ENCODE measurements at regions of chr7 and their contacts with region 1.

Region 1: DNA sequence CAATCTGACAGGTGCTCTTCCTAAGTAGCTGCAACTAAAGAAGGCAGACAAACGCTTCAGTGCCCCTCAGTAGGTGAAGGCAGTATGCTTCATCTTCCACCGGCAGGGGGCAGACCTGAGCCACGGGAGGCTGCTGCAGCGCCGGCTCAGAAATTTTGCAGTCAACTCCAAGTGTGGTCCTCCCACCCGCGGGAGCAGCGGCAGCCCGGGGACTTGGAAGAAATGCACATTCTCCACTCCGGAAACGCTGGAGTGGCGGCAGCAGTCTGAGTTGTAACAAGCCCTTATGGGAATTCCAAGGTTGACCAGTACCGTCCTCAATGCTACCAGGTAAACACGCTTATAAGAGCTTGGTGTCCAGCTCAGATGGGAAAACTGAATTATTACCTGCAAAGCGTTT is 3.4 kb downstream of the IGFBP3 start:
- DNase-seq: no peak
- ATAC-seq: peak; percentile 69
- H3K4me3 ChIP-seq: no peak overlapping the region
- H3K27ac ChIP-seq: no peak overlapping the region
- H3K4me1 ChIP-seq: peaks cover 3 to 24% of the 10 kb centered on the region in 2 experiments; a peak in 2 of 4 replicates
- H3K27me3 ChIP-seq: peaks cover 8% of the 10 kb centered on the region; the same call in 1 of the 2 replicates
- CTCF ChIP-seq: peak; percentile 70 to 95 (median 91)
- POLR2A ChIP-seq: no peak
- RAD21 ChIP-seq: peak; percentile 84

Region 2: GRCh38 chr7:45384499-45384898 is 533.2 kb before region 1 on chr7:
- CTCF ChIA-PET with region 1: no interaction called
- POLR2A ChIA-PET with region 1: no interaction called
- RAD21 ChIA-PET with region 1: no interaction called
- intact Hi-C with region 1: no loop called
- DNase-seq: no peak
- ATAC-seq: 0 out of 2 replicates have a peak, but pooled peaks have one; percentile 30
- H3K4me3 ChIP-seq: no peak overlapping the region
- H3K27ac ChIP-seq: no peak overlapping the region
- H3K4me1 ChIP-seq: no peaks in the 10 kb centered on the region
- H3K27me3 ChIP-seq: peaks cover 3% of the 10 kb centered on the region; the same call in 1 of the 2 replicates
- CTCF ChIP-seq: no peak
- POLR2A ChIP-seq: no peak
- RAD21 ChIP-seq: no peak

Region 3: DNA sequence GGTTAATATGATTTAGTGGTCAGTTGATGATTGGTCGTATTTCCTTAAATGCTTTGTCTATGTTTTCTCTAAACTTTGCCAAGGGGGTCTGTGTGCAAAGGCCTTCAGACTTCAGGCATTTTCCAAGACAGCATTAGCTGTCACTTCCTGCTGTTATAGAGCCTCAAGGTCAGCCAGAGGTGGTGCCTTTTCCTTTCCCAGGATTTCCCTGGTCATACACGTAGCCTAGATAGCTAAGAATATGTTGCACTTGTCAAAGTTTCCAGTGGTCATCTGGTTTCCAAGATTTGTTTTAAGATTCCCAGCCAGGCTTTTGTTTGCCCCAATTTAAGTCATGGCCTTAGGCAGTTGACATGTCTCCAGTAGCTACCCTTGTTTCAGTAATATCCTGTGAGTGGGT is 136.6 kb after region 1 on chr7:
- CTCF ChIA-PET with region 1: no interaction called
- POLR2A ChIA-PET with region 1: no interaction called
- RAD21 ChIA-PET with region 1: no interaction called
- intact Hi-C with region 1: no loop called
- DNase-seq: no peak
- ATAC-seq: no peak
- H3K4me3 ChIP-seq: no peak overlapping the region
- H3K27ac ChIP-seq: no peak overlapping the region
- H3K4me1 ChIP-seq: no peaks in the 10 kb centered on the region
- H3K27me3 ChIP-seq: no peaks in the 10 kb centered on the region
- CTCF ChIP-seq: no peak
- POLR2A ChIP-seq: no peak
- RAD21 ChIP-seq: no peak

Region 4: DNA sequence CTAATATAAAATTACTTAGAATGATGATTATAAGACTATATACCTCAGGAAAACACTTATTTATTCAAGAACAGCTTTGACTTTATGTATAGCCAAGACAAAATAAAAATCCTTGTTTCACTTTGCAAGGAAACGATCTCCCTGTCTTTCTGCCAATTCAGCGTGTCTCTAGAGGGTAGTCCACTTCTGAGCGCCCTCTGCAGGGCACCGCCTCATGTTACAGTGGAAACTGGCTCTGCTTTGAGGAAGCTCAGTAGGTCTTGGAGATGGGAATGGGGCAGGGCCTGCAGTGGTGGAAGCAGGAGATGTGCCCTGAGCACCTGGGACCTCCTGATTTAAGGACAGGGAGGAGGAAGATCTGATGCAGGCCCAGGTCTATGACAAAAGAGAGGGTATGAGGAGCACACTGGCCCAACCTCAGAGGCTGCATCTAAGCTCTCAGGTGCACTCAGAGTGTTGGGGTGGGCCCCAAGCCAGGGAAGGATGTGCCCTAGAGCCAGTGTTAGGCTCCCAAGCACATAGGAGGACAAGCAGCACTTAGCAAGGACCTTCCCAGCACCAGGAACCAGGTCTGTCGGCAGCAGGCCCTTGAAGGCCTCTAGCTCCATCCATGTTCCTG is 1183.3 kb after region 1 on chr7:
- CTCF ChIA-PET with region 1: interaction called, 12 read pairs
- POLR2A ChIA-PET with region 1: no interaction called
- RAD21 ChIA-PET with region 1: no interaction called
- intact Hi-C with region 1: no loop called
- DNase-seq: peak; percentile 61
- ATAC-seq: peak; percentile 98
- H3K4me3 ChIP-seq: peak overlapping the region; percentile 17 to 45; a peak in 3 of 4 replicates
- H3K27ac ChIP-seq: no peak overlapping the region
- H3K4me1 ChIP-seq: peaks cover 0 to 3% of the 10 kb centered on the region in 2 experiments; a peak in 1 of 4 replicates
- H3K27me3 ChIP-seq: no peaks in the 10 kb centered on the region
- CTCF ChIP-seq: peak; percentile 52 to 94 (median 89); a peak in 4 of 6 replicates
- POLR2A ChIP-seq: no peak
- RAD21 ChIP-seq: peak; percentile 69